Activated CD4-positive, alpha-beta T cell treated with anti-CD3 and anti-CD28 coated beads for 36 hours (primary cell): ENCODE measurements at regions of chr2 and their contacts with region 1.

Region 1: DNA sequence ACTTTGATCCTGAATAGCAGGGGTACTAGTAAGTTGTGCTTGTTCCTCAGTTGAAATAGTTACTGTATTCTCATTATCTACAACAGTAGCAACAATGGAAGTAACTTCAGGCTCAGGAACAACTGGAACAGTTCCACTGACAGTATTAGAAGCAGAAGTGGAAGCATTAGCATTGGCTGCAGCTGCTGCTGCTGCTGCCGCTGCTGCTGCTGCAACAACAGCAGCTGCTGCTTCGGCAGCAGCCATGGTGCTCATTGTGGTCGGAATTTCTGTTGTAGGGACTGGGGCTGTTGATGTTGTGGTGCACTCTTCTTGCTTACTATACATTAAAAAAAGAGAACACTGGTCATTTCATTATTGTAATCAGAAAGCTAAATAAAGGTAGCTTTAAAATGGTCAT is 40.8 kb downstream of the PRPF40A start:
- DNase-seq: no peak
- ATAC-seq: no peak
- H3K4me3 Mint-ChIP-seq: no peak overlapping the region
- H3K27ac Mint-ChIP-seq: no peak overlapping the region
- H3K4me1 Mint-ChIP-seq: peaks cover 6% of the 10 kb centered on the region
- H3K27me3 Mint-ChIP-seq: no peaks in the 10 kb centered on the region

Region 2: DNA sequence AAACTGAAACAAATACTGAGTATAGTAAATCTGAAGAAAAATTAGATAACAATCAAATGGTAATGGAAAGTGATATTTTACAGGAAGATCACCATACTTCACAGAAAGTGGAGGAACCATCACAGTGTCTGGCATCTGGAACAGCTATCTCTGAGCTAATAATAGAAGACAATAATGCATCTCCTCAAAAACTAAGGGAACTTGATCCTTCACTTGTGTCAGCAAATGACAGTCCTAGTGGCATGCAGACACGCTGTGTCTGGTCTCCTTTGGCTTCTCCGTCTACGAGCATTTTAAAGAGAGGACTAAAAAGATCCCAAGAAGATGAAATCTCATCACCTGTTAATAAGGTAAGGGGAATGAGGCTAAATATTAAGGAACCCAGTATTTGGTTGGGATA is 1210.7 kb before region 1 on chr2:
- CTCF ChIA-PET with region 1: no interaction called
- POLR2A ChIA-PET with region 1: no interaction called
- intact Hi-C with region 1: loop called in 1 of 2 experiments (anchors 10 kb)
- DNase-seq: no peak
- ATAC-seq: no peak
- H3K4me3 Mint-ChIP-seq: no peak overlapping the region
- H3K27ac Mint-ChIP-seq: no peak overlapping the region
- H3K4me1 Mint-ChIP-seq: peaks cover 3% of the 10 kb centered on the region
- H3K27me3 Mint-ChIP-seq: no peaks in the 10 kb centered on the region

Region 3: GRCh38 chr2:152720361-152720760 is 43.9 kb after region 1 on chr2:
- CTCF ChIA-PET with region 1: no interaction called
- POLR2A ChIA-PET with region 1: no interaction called
- intact Hi-C with region 1: no loop called
- DNase-seq: no peak
- ATAC-seq: no peak
- H3K4me3 Mint-ChIP-seq: peak overlapping the region; percentile 99
- H3K27ac Mint-ChIP-seq: no peak overlapping the region
- H3K4me1 Mint-ChIP-seq: peaks cover 56% of the 10 kb centered on the region
- H3K27me3 Mint-ChIP-seq: no peaks in the 10 kb centered on the region